Ascending aorta (tissue), 2 donors: ENCODE measurements at regions of chr7 and their contacts with region 1.

Region 1: GRCh38 chr7:36366718-36367560 is 22.7 kb upstream of the ANLN start:
- DNase-seq: peak; percentile 32 to 94
- H3K4me3 ChIP-seq: peak overlapping the region; percentile 74 to 93
- H3K27ac ChIP-seq: peak overlapping the region; percentile 54 to 77
- H3K4me1 ChIP-seq: peaks cover 0 to 3% of the 10 kb centered on the region in 2 donors
- H3K27me3 ChIP-seq: no peaks in the 10 kb centered on the region
- CTCF ChIP-seq: peak; percentile 90 to 95 (median 94)

Region 2: DNA sequence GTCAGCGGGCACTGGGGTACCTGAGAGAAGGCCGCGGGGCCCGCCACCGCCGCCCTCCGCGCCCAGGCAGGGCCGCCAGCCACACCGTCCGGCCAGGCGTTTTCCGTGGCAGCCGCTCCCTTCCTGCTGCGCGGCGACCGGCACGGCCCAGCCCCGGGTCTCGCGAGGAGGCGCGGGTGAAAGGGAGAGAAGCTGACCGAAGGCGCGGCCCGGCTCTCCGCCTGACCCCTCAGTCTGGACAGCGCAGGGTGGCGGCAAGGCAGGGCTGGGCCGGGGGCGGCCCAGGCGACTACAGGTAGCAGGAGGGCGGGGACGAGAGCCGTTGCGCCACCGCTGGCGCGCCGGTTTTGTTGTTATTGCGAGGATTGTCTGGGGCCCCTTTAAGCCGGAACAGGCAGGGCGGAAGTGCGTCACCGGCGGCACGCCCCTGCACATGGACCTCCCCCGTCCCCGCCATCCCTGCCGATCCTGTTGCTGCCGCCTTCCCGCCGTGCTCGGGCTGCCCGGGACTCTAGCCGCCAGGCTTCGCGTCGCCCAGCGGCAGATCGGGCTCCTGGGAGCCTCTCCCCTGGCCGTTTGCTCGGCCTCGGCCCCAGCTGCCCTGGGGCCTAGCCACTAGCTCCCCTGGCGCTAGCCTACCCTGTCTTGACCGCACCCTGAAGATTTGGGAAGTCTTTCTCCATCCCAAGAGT is 672.0 kb before region 1 on chr7 and contains the start of gene HERPUD2:
- intact Hi-C with region 1: loop called (anchors 1 kb)
- DNase-seq: peak; percentile 76 to 95
- H3K4me3 ChIP-seq: peak within 1 kb of the TSS; percentile 81 to 86
- H3K27ac ChIP-seq: peak within 1 kb of the TSS; percentile 93 to 97
- H3K4me1 ChIP-seq: peaks cover 3 to 21% of the 10 kb centered on the region in 2 donors
- H3K27me3 ChIP-seq: no peaks in the 10 kb centered on the region
- CTCF ChIP-seq: no peak
- total RNA-seq, gene HERPUD2: 69.8 TPM

Region 3: DNA sequence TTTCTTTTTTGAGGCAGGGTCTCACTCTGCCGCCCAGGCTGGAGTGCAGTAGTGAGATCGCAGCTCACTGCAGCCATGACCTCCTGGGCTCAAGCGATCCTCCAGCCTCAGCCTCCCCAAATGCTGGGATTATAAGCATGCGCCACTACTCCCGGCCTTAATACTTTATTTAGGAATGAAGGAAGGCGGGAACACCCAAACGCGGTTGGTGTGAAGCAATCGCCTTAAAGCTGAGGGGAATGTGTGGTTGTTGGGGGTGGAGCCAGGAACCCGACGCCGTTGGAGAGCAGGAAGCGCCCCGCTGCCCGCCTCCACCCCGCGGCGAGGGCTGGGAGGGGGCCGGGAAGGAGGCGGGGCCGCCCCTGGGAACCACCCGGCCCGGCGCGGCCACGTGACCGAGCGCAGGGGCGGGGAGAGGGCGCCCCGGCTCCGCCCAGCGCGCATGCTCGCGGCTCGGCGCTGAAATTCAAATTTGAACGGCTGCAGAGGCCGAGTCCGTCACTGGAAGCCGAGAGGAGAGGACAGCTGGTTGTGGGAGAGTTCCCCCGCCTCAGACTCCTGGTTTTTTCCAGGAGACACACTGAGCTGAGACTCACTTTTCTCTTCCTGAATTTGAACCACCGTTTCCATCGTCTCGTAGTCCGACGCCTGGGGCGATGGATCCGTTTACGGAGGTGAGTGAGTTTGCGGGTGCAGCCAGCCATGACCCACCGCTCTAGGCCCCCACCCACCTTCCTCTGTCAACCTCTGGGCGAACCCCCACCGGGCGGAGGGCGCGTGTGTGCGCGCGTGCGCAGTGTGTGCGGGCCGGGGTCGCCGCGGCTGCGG is 22.6 kb after region 1 on chr7 and contains the start of gene ANLN:
- intact Hi-C with region 1: loop called (anchors 1 kb)
- DNase-seq: peak; percentile 70 to 97
- H3K4me3 ChIP-seq: peak within 1 kb of the TSS; percentile 53 to 77
- H3K27ac ChIP-seq: peak within 1 kb of the TSS; percentile 83 to 87
- H3K4me1 ChIP-seq: peaks cover 0 to 10% of the 10 kb centered on the region in 2 donors
- H3K27me3 ChIP-seq: no peaks in the 10 kb centered on the region
- CTCF ChIP-seq: no peak
- total RNA-seq, gene ANLN: 1.8 TPM

Region 4: GRCh38 chr7:36514289-36515243 is 147.6 kb after region 1 on chr7:
- intact Hi-C with region 1: no loop called
- DNase-seq: no peak
- H3K4me3 ChIP-seq: no peak overlapping the region
- H3K27ac ChIP-seq: no peak overlapping the region
- H3K4me1 ChIP-seq: no peaks in the 10 kb centered on the region
- H3K27me3 ChIP-seq: no peaks in the 10 kb centered on the region
- CTCF ChIP-seq: no peak